ENCODE measurements at regions of chr17 and their contacts with region 1.

Region 1: GRCh38 chr17:633641-634101 is 81.0 kb downstream of the VPS53 start:
- DNase-seq: no peak
- ATAC-seq: no peak
- H3K4me3 ChIP-seq: no peak overlapping the region
- H3K4me3 Mint-ChIP-seq: no peak overlapping the region
- H3K27ac ChIP-seq: no peak overlapping the region
- H3K27ac Mint-ChIP-seq: no peak overlapping the region
- H3K4me1 ChIP-seq: no peaks in the 10 kb centered on the region
- H3K4me1 Mint-ChIP-seq: no peaks in the 10 kb centered on the region
- H3K27me3 ChIP-seq: no peaks in the 10 kb centered on the region
- H3K27me3 Mint-ChIP-seq: no peaks in the 10 kb centered on the region
- CTCF ChIP-seq: no peak

Region 2: GRCh38 chr17:491086-492021 is 142.3 kb before region 1 on chr17:
- CTCF ChIA-PET with region 1: no interaction called
- POLR2A ChIA-PET with region 1: no interaction called
- intact Hi-C with region 1: no loop called
- DNase-seq: peak in 10 of 14 experiments; percentile 9 to 66 (median 32)
- ATAC-seq: no peak
- H3K4me3 ChIP-seq: peak overlapping the region; percentile 25
- H3K4me3 Mint-ChIP-seq: peak overlapping the region; percentile 86
- H3K27ac ChIP-seq: no peak overlapping the region
- H3K27ac Mint-ChIP-seq: peak overlapping the region; percentile 88
- H3K4me1 ChIP-seq: peaks cover 25% of the 10 kb centered on the region
- H3K4me1 Mint-ChIP-seq: peaks cover 15% of the 10 kb centered on the region
- H3K27me3 ChIP-seq: no peaks in the 10 kb centered on the region
- H3K27me3 Mint-ChIP-seq: peaks cover 4% of the 10 kb centered on the region
- CTCF ChIP-seq: no peak

Region 3: GRCh38 chr17:596763-597644 is 36.7 kb before region 1 on chr17:
- CTCF ChIA-PET with region 1: no interaction called
- POLR2A ChIA-PET with region 1: no interaction called
- intact Hi-C with region 1: loop called in 1 of 2 experiments (anchors 5 kb)
- DNase-seq: no peak
- ATAC-seq: no peak
- H3K4me3 ChIP-seq: no peak overlapping the region
- H3K4me3 Mint-ChIP-seq: no peak overlapping the region
- H3K27ac ChIP-seq: no peak overlapping the region
- H3K27ac Mint-ChIP-seq: no peak overlapping the region
- H3K4me1 ChIP-seq: no peaks in the 10 kb centered on the region
- H3K4me1 Mint-ChIP-seq: no peaks in the 10 kb centered on the region
- H3K27me3 ChIP-seq: no peaks in the 10 kb centered on the region
- H3K27me3 Mint-ChIP-seq: no peaks in the 10 kb centered on the region
- CTCF ChIP-seq: no peak